ENCODE measurements at regions of chr5 and their contacts with region 1.

Region 1: DNA sequence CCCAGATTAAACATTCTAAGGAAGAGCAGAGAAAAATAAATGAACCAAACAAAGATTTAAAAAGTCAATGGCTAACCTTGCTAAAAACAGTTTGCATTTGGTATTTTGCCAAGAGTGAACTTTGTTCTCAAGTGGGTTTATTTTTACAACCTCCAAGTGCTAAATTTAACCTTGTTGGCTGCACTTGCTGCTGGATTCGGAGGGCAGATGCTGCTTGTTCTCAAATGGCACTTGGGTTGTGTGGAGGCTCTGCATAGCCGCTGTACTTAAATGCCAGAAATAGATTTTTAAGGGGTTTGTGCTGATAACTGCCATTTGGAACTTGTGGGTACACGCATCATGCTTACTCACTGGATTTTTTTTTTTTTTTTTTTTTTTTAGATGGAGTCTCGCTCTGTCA is 13.3 kb upstream of the SPATA24 start:
- DNase-seq: no peak
- H3K4me3 Mint-ChIP-seq: no peak overlapping the region
- H3K27ac Mint-ChIP-seq: peak overlapping the region; percentile 96
- H3K4me1 Mint-ChIP-seq: peaks cover 56% of the 10 kb centered on the region
- H3K27me3 Mint-ChIP-seq: no peaks in the 10 kb centered on the region

Region 2: DNA sequence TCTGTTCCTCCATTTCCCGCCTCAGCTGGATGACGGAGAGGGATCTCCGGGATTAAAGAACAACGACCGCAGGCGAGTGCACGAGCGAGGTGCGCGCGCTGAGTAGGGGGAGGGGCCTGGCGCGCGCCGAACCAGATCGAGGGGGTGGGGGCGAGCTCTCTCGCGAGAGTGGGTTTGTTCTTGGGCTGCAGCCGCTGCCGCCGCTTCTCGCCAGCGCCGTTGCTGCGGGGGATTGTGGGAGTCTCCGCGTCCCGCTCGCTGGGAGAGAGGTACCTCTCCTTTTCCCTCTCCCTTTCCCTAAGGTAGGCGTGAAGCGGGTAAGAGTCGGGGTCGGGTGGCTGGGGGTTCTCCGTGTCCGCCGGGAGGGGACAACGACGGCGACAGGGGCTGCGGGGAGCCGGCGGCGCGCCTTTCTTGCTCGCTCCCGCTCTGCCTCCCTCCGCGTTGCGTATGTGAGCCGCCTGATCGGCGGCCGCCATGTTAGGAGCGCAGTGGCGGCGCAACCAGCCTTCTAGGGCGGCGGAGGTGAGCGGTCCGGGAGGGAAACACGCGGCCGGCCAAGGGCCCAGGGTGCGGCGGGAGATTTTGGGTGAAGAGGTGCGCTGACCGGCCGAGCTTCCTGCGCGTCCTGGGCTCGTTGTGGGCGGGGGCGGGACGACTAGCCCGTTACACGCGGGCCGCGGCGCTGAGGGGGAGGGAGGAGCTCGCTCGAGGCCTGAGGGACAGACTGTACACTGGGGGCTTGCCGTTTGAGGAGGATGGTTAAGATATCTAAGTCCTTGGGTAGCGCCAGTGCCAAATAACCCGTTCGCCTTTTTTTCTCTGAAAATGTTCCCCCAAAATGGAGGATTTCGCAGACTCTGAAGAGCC is 123.5 kb before region 1 on chr5 and contains the start of gene MATR3:
- CTCF ChIA-PET with region 1: no interaction called
- POLR2A ChIA-PET with region 1: interaction called, 11 read pairs
- intact Hi-C with region 1: no loop called
- DNase-seq: peak; percentile 96
- H3K4me3 Mint-ChIP-seq: peak within 1 kb of the TSS; percentile 95
- H3K27ac Mint-ChIP-seq: peak within 1 kb of the TSS; percentile 98
- H3K4me1 Mint-ChIP-seq: peaks cover 31% of the 10 kb centered on the region
- H3K27me3 Mint-ChIP-seq: no peaks in the 10 kb centered on the region
- total RNA-seq, gene MATR3: 163 to 179 TPM

Region 3: DNA sequence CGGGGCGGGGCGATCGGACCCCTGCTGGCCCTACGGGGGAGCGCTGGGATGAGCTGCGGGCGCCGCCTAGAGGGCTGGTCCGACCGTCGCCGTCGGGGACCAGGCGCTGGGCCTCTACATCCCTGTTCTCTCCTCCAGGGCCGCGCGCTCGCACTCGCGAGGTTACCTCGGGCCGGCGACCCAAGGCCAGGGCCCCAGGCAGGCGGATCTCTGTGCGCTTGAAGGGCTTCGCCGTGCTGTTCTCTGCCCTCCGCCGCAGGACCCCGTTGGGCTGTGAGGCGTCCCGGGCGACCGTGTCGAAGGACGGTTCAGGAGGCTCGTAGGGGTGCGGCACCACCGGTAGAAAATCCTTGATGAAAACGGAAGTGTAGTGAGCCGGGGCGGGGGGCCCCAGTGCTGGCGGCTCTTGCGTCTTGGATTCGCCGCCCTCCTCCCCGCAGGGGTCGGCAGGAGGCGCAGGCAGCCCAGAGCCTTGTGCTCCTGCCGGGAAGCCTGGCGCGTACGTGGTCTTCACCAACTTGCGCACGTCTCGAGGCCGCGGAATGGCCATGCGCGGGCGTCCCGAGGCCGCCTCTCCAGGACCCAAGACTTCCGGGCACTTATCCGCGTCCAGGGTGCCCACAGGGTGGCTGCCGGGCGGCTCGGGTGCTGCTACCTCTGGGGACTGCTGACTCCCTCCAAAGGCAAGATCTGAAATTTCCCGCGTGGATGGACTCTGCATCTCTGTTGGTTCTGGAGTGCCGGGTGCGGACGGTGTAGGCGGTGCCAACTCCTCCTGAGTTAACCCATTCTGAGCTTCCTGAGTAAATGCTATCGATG is 24.3 kb before region 1 on chr5:
- CTCF ChIA-PET with region 1: interaction called, 4 read pairs
- POLR2A ChIA-PET with region 1: interaction called, 57 read pairs
- intact Hi-C with region 1: loop called (anchors 1 kb)
- DNase-seq: peak; percentile 93
- H3K4me3 Mint-ChIP-seq: peak overlapping the region; percentile 93
- H3K27ac Mint-ChIP-seq: peak overlapping the region; percentile 87
- H3K4me1 Mint-ChIP-seq: peaks cover 34% of the 10 kb centered on the region
- H3K27me3 Mint-ChIP-seq: no peaks in the 10 kb centered on the region

Region 4: DNA sequence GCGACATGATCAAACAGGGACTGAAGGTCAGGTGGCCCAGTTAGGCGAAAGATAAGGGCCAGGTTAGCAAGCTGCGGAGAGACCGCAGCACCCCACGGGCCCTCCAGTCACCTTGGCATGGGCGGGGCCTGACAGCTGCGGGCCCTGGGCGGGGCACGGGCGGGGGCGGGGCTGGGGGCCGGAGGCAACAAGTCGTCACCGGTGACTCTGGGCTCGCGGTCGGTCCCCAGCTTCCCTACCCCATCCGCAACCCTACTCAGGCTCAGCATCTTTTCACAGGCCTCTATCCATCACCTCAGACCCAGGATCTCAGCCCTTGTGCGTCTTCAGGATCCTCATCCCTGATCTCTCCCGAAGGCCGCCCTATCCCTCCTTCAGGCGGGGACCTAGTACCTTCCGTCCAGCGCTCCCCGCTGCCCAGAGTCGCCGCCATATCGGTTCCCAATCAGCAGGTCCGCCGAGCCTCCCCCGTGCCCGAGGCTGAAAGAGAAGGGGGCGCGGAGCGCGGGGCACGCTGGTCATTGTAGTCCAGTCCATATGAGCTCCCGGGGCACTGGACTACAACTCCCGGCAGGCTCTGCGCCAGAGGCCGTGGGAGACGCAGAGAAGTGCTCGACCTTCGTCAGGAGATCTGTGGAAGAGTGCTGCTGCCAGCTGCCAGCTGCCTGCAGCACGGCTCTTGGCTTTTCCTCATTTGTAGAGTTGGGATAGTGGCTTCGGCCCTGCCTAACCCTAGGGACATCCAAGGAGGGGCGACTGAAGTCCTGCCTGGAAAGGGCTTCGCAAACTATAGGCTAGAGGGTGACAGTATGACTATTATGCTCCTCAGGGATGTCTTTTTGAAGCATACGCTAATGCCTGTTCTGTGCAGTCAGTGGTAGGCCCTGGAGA is 22.0 kb after region 1 on chr5 and contains the start of gene DNAJC18:
- CTCF ChIA-PET with region 1: interaction called, 46 read pairs
- POLR2A ChIA-PET with region 1: interaction called, 34 read pairs
- intact Hi-C with region 1: no loop called
- DNase-seq: peak; percentile 96
- H3K4me3 Mint-ChIP-seq: peak within 1 kb of the TSS; percentile 98
- H3K27ac Mint-ChIP-seq: peak within 1 kb of the TSS; percentile 99
- H3K4me1 Mint-ChIP-seq: peaks cover 62% of the 10 kb centered on the region
- H3K27me3 Mint-ChIP-seq: no peaks in the 10 kb centered on the region
- total RNA-seq, gene DNAJC18: 54.1 to 56.0 TPM

Region 5: GRCh38 chr5:139458580-139459406 is 41.6 kb after region 1 on chr5:
- CTCF ChIA-PET with region 1: interaction called, 10 read pairs
- POLR2A ChIA-PET with region 1: interaction called, 14 read pairs
- intact Hi-C with region 1: loop called (anchors 1 kb)
- DNase-seq: peak; percentile 90
- H3K4me3 Mint-ChIP-seq: peak overlapping the region; percentile 56
- H3K27ac Mint-ChIP-seq: peak overlapping the region; percentile 97
- H3K4me1 Mint-ChIP-seq: peaks cover 65% of the 10 kb centered on the region
- H3K27me3 Mint-ChIP-seq: no peaks in the 10 kb centered on the region

Region 6: GRCh38 chr5:139482050-139482889 is 65.1 kb after region 1 on chr5 and contains the start of gene STING1:
- CTCF ChIA-PET with region 1: interaction called, 40 read pairs
- POLR2A ChIA-PET with region 1: interaction called, 50 read pairs
- intact Hi-C with region 1: loop called (anchors 1 kb)
- DNase-seq: peak; percentile 83
- H3K4me3 Mint-ChIP-seq: peak within 1 kb of the TSS; percentile 94
- H3K27ac Mint-ChIP-seq: peak within 1 kb of the TSS; percentile 99
- H3K4me1 Mint-ChIP-seq: peaks cover 38% of the 10 kb centered on the region
- H3K27me3 Mint-ChIP-seq: no peaks in the 10 kb centered on the region
- total RNA-seq, gene STING1: 339 to 344 TPM

Region 7: DNA sequence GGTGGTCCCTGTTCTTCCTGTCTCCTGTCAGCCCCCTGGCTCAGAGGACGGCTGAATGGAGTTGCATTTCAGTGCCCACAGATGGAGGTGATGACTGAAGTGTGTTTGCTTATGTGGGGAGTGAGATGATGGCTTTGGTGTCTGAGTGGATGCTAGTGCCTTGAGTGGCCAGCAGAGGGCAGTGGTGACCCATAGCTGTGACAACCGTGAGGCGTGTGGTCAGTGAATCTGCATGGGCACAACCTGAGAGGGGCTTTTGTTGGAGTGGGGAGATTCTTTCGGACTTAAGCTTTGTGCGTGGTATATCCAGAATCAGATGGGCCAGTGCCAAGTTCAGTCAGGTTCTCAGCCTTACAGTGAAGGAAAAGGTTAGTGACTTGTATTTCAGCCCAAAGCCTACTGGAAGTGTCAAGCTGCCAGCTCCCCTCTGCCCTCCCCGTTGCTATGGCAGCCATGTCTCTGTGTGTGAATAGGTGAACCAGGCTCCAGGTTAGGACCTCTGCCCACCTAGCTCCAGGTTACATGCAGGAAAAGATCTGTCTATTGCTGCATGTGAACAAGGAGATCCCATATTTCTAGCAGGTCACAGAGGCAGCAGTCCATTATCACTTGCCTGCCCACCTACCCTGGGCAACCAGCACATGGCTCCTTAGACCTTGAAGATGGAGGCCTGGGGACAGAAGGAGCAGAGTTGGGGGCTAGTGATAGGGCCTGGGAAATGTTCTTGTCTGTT is 216.2 kb after region 1 on chr5:
- CTCF ChIA-PET with region 1: interaction called, 5 read pairs
- POLR2A ChIA-PET with region 1: no interaction called
- intact Hi-C with region 1: loop called (anchors 1 kb)
- DNase-seq: peak; percentile 76
- H3K4me3 Mint-ChIP-seq: no peak overlapping the region
- H3K27ac Mint-ChIP-seq: peak overlapping the region; percentile 23
- H3K4me1 Mint-ChIP-seq: peaks cover 40% of the 10 kb centered on the region
- H3K27me3 Mint-ChIP-seq: no peaks in the 10 kb centered on the region

Region 8: GRCh38 chr5:139759219-139759721 is 342.1 kb after region 1 on chr5:
- CTCF ChIA-PET with region 1: no interaction called
- POLR2A ChIA-PET with region 1: no interaction called
- intact Hi-C with region 1: no loop called
- DNase-seq: no peak
- H3K4me3 Mint-ChIP-seq: no peak overlapping the region
- H3K27ac Mint-ChIP-seq: no peak overlapping the region
- H3K4me1 Mint-ChIP-seq: peaks cover 15% of the 10 kb centered on the region
- H3K27me3 Mint-ChIP-seq: peaks cover 52% of the 10 kb centered on the region